ENCODE measurements at regions of chr12 and their contacts with region 1.

Region 1: DNA sequence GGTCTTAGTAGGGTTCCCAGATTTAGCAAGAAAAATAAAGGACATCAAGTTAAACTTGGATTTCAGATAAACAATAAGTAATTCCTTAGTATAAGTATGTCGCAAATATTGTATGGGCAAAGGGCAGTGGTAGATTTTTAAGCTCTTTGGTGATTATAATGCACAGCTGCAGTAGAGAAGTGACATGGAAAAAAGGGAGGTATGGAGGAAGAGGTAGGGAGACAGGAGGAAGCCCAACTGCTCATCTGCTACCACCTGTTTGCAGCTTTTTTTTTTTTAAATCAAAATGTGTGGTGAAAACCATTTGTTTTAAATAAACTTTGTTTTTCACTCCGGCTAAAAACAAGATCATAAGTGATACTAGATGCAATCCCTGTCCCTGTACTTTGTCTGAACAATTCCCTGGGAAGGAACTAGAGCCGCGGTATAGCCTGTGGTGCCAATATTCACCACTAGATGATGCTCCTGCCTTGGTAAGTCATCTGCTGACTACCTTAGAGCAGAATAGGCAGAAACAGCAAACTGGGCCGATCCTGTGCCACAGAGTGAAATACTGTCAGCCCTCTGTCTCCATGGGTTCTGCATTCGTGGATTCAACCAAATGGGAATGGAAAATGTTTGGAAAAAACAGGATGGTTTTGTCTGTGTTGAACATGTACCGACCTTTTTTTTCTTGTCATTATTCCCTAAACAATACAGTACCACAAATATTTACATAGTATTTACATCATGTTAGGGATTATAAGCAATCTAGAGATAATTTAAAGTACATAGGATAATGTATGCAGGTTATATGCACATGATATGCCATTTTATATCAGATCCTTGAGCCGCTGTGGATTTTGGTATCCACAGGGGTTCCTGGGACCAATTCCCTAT is 62.4 kb upstream of the PLBD1 start:
- DNase-seq: peak; percentile 82 to 89
- H3K4me3 ChIP-seq: no peak overlapping the region
- H3K4me3 Mint-ChIP-seq: no peak overlapping the region
- H3K27ac Mint-ChIP-seq: no peak overlapping the region
- H3K4me1 ChIP-seq: peaks cover 18% of the 10 kb centered on the region
- H3K4me1 Mint-ChIP-seq: peaks cover 27% of the 10 kb centered on the region
- H3K27me3 ChIP-seq: no peaks in the 10 kb centered on the region
- H3K27me3 Mint-ChIP-seq: no peaks in the 10 kb centered on the region
- CTCF ChIP-seq: peak; percentile 98 to 99

Region 2: DNA sequence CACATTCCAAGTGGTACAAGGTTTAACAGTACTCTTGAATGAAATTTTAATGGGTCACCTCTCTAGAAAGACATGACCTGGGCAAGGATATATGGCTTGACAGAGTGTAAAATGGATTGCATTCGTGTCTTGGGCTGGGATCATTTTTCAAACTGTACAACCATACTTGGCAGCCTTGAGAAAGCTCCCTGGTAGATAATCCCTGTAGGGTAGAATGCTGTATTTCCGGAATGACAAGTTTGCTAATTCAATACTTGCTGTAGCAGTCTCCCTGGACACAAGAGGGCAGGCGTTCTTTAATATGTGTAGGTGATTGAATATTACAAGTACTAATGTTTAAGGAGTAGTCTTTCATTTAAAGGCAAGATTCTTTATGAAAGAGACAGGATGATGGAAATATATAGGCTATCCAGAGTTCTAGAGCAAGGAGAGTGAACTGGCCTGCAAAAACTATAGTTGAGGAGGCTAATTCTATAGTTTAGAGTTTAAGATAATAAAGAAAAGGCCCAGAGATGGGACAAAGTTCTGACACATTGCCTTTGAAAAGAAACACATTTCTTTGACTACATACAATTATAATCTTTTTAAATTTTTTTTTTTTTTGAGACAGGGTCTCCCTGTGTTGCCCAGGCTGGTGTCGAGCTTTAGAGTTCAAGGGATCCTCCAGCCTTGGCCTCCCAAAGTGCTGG is 115.8 kb before region 1 on chr12:
- CTCF ChIA-PET with region 1: no interaction called
- POLR2A ChIA-PET with region 1: no interaction called
- intact Hi-C with region 1: loop called (anchors 1 kb)
- DNase-seq: peak; percentile 82 to 92
- H3K4me3 ChIP-seq: no peak overlapping the region
- H3K4me3 Mint-ChIP-seq: peak overlapping the region; percentile 47
- H3K27ac Mint-ChIP-seq: peak overlapping the region; percentile 68
- H3K4me1 ChIP-seq: peaks cover 14% of the 10 kb centered on the region
- H3K4me1 Mint-ChIP-seq: peaks cover 16% of the 10 kb centered on the region
- H3K27me3 ChIP-seq: no peaks in the 10 kb centered on the region
- H3K27me3 Mint-ChIP-seq: no peaks in the 10 kb centered on the region
- CTCF ChIP-seq: peak; percentile 71 to 87

Region 3: DNA sequence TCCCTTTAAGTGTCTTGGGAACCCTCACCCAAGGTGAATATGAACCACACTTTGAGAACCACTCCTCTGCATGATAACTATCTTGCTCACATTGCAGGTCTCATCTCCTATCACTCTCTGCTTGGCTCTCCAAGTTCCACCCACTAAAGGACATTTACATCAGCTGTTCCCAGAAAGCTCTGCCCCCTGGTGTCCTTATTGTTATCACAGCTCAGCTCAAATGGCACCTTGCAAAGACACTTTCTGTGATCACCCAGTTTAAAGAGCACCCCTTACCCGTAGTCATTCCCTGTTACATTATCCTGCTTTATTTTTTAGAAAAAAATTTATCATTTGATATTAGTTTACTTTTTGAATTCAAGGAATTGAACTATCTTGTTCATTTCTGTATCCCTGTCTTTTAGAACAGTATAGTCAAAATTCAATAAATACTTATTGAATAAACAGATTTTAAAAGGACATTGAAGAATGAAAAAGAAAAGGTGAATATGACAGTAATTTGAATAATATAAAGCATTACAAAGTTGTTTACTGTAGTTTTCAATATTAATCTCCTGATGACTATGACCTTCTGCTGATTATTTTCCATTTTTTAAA is 86.9 kb after region 1 on chr12:
- CTCF ChIA-PET with region 1: interaction called, 3 read pairs
- POLR2A ChIA-PET with region 1: no interaction called
- intact Hi-C with region 1: loop called (anchors 1 kb)
- DNase-seq: peak; percentile 59 to 67
- H3K4me3 ChIP-seq: no peak overlapping the region
- H3K4me3 Mint-ChIP-seq: no peak overlapping the region
- H3K27ac Mint-ChIP-seq: no peak overlapping the region
- H3K4me1 ChIP-seq: peaks cover 5% of the 10 kb centered on the region; the same call in 1 of the 2 replicates
- H3K4me1 Mint-ChIP-seq: peaks cover 16% of the 10 kb centered on the region
- H3K27me3 ChIP-seq: no peaks in the 10 kb centered on the region
- H3K27me3 Mint-ChIP-seq: no peaks in the 10 kb centered on the region
- CTCF ChIP-seq: peak; percentile 30 to 64

Region 4: DNA sequence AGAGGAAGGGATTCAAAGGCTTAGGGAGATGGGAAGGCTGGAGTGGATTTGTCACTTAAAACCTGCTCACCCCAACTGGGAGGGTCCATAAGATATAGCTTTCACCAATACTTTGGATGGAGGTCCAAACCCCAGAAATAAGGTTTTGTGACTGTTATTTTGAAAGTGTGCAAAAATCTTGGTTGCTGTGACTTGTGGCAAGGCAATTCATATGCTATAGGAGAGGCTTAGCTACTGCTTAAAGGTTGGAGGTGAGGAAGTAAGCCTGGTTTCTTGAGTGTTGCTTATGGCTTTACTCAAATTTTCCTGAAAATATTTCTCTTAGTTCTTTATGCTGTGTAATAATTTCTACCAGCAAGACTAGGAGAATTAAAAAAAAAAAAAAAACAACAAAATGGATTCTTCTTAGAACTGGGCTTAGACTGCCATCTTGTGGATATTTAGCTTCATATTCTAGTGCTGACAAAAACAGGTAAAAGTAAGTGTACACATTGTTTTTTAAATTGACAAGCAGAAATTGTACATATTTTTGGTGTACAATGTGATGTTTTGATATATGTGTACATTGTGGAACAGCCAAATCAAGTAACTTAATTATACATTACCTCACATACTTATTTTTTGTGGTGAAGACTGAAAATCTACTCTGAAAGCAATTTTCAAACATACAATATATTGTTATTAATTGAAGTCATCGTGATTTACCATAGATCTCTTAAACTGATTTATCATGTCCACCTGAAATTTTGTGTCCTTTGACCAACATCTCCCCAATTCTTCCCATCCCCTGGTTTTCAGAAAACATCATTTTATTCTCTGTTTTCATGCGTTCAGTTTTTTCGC is 365.7 kb after region 1 on chr12:
- CTCF ChIA-PET with region 1: no interaction called
- POLR2A ChIA-PET with region 1: no interaction called
- intact Hi-C with region 1: loop called (anchors 1 kb)
- DNase-seq: peak in 1 of 2 experiments; percentile 46
- H3K4me3 ChIP-seq: no peak overlapping the region
- H3K4me3 Mint-ChIP-seq: no peak overlapping the region
- H3K27ac Mint-ChIP-seq: no peak overlapping the region
- H3K4me1 ChIP-seq: 0 out of 2 replicates have a peak, but pooled peaks cover 4% of the 10 kb centered on the region
- H3K4me1 Mint-ChIP-seq: peaks cover 7% of the 10 kb centered on the region
- H3K27me3 ChIP-seq: no peaks in the 10 kb centered on the region
- H3K27me3 Mint-ChIP-seq: peaks cover 14% of the 10 kb centered on the region
- CTCF ChIP-seq: peak; percentile 69 to 74